Activated B cell treated with CpG ODN at 0.5 μM for 24 hours (primary cell): ENCODE measurements at regions of chr15 and their contacts with region 1.

Region 1: GRCh38 chr15:81265944-81266775 is 57.8 kb downstream of the STARD5 start:
- DNase-seq: peak; percentile 64
- ATAC-seq: peak; percentile 92
- H3K4me3 Mint-ChIP-seq: peak overlapping the region; percentile 69
- H3K27ac Mint-ChIP-seq: no peak overlapping the region
- H3K4me1 Mint-ChIP-seq: peaks cover 19% of the 10 kb centered on the region
- H3K27me3 Mint-ChIP-seq: no peaks in the 10 kb centered on the region
- CTCF ChIP-seq: no peak

Region 2: GRCh38 chr15:80695104-80695910 is 570.9 kb before region 1 on chr15 and contains the start of gene ABHD17C:
- CTCF ChIA-PET with region 1: no interaction called
- POLR2A ChIA-PET with region 1: no interaction called
- intact Hi-C with region 1: loop called (anchors 10 kb)
- DNase-seq: peak; percentile 58
- ATAC-seq: peak; percentile 82
- H3K4me3 Mint-ChIP-seq: peak within 1 kb of the TSS; percentile 87
- H3K27ac Mint-ChIP-seq: peak within 1 kb of the TSS; percentile 69
- H3K4me1 Mint-ChIP-seq: peaks cover 16% of the 10 kb centered on the region
- H3K27me3 Mint-ChIP-seq: peaks cover 5% of the 10 kb centered on the region
- CTCF ChIP-seq: no peak
- total RNA-seq, gene ABHD17C: 2.4 and 2.5 TPM in 2 replicates

Region 3: DNA sequence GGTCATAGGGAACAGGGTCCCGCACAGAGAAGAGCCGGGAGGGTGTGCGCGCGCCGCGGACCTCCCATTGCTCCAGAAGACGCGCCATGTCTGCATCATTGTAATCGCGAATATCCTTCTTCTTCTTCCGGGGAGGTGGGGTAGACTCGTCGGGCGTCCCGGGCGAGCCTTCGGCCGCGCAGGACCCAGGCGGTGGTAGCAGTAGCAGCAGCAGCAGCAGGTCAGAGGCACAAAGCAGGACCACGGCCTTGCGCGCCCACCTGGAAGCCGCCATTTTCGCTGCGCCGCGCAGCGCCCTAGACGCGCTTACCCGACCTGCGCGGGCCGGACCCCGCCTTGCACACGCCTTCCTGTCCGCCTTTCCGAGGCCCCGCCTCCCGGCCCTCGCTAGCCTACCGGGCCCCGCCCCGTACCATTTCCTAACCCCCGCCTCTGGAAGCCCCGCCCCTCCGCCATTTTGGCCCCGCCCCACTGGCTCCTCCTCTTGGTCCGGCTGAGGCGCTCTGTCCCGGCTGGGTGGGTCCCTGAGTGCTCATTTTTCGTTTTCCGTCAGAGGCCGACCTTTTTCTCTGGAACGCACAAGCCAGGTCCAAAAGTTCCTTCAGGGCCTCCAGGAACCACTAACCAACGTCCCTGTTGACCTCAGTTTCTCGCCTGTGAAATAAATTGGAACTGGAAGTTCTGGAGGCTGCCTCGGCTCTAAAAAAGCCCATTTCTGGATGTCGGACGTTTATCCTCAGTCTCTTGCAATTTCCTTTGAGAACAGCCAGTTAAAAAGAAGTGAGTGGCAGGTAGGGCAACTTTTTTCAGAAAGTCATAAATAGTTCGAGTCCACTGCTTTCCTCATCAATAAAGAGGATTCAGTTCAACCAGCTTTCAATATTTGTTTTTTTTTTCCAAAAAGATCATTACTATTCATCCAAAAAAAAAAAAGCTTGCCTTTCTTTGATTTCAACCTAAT is 276.4 kb before region 1 on chr15 and contains the start of gene MESD:
- CTCF ChIA-PET with region 1: interaction called, 12 read pairs
- POLR2A ChIA-PET with region 1: no interaction called
- intact Hi-C with region 1: no loop called
- DNase-seq: peak; percentile 90
- ATAC-seq: peak; percentile 99
- H3K4me3 Mint-ChIP-seq: peak within 1 kb of the TSS; percentile 99
- H3K27ac Mint-ChIP-seq: peak within 1 kb of the TSS; percentile 99
- H3K4me1 Mint-ChIP-seq: peaks cover 54% of the 10 kb centered on the region
- H3K27me3 Mint-ChIP-seq: no peaks in the 10 kb centered on the region
- CTCF ChIP-seq: no peak
- total RNA-seq, gene MESD: 21.4 and 23.8 TPM in 2 replicates

Region 4: GRCh38 chr15:81071120-81071519 is 195.0 kb before region 1 on chr15:
- CTCF ChIA-PET with region 1: no interaction called
- POLR2A ChIA-PET with region 1: no interaction called
- intact Hi-C with region 1: no loop called
- DNase-seq: no peak
- ATAC-seq: no peak
- H3K4me3 Mint-ChIP-seq: no peak overlapping the region
- H3K27ac Mint-ChIP-seq: no peak overlapping the region
- H3K4me1 Mint-ChIP-seq: no peaks in the 10 kb centered on the region
- H3K27me3 Mint-ChIP-seq: peaks cover 14% of the 10 kb centered on the region
- CTCF ChIP-seq: no peak

Region 5: DNA sequence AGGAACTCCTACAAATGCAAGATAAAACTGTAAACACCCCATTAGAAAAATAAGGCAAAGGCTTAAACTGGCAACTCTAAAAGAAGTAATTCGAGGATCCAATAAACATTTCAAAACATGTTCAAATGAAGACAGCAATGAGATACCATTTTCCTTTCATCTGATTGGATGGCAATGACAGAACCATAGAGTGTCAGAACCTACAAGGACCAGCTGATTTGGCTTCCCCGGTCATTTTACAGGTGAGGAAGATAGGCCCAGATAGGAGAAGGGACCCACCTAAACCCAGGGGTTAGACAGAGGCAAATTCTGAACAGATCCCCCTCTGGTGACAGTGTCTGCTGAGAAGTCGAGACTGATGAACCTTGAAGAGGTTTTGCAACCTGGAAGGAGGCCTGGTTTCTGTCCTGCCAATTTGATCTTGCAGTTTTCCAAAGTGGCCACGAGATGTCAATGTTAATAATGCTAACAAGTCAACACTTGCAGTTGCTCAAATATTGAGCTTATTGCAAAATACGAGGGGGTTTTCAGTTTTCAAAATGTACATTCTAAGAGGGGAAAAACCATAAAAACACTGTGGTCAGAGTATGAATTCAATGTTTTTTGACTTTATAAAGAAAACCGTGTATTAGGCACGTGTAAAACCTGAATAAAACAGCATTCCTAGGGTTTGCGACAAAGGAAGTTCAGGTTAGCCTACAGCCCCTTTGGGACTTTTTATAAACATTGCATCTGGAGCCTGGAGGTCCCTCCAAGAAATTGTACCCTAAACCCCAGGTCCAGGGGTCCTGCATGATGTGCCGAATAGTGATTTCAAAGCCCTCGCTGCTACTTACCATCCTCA is 110.6 kb before region 1 on chr15:
- CTCF ChIA-PET with region 1: interaction called, 98 read pairs
- POLR2A ChIA-PET with region 1: interaction called, 7 read pairs
- intact Hi-C with region 1: loop called (anchors 1 kb)
- DNase-seq: no peak
- ATAC-seq: peak; percentile 31
- H3K4me3 Mint-ChIP-seq: no peak overlapping the region
- H3K27ac Mint-ChIP-seq: no peak overlapping the region
- H3K4me1 Mint-ChIP-seq: peaks cover 3% of the 10 kb centered on the region
- H3K27me3 Mint-ChIP-seq: peaks cover 4% of the 10 kb centered on the region
- CTCF ChIP-seq: no peak

Region 6: GRCh38 chr15:81296673-81297072 is 30.5 kb after region 1 on chr15:
- CTCF ChIA-PET with region 1: interaction called, 22 read pairs
- POLR2A ChIA-PET with region 1: interaction called, 20 read pairs
- intact Hi-C with region 1: no loop called
- DNase-seq: peak; percentile 56
- ATAC-seq: peak; percentile 32
- H3K4me3 Mint-ChIP-seq: peak overlapping the region; percentile 99
- H3K27ac Mint-ChIP-seq: peak overlapping the region; percentile 99
- H3K4me1 Mint-ChIP-seq: peaks cover 98% of the 10 kb centered on the region
- H3K27me3 Mint-ChIP-seq: no peaks in the 10 kb centered on the region
- CTCF ChIP-seq: no peak

Region 7: DNA sequence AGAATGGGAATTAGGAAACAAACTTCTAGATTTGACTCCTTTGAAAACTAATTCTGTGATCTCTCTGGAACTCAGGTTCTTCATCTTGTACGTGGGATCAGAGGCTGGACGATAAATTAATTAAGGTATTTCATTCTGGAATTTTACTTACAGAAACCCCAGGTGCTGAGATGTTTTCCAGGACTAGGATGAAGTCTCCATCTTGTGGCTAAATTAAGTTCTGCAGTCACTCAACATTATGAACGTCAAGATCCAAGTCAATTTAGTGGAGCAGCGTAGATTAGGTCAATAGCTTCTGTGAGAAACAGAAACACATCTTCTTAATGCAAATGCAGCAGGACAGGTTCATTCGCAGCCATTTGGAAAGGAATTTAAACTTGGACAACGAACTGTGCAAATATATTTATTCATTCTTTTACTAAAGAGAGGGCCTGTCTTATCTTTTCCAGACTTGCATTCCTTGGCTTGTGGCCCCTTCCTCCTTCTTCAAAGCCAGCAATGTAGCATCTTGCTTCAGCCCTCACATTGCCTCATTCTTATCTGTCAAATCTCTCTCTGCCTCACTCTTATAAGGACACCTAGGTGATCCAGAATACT is 134.6 kb after region 1 on chr15:
- CTCF ChIA-PET with region 1: interaction called, 29 read pairs
- POLR2A ChIA-PET with region 1: no interaction called
- intact Hi-C with region 1: loop called (anchors 2 kb)
- DNase-seq: no peak
- ATAC-seq: peak; percentile 58
- H3K4me3 Mint-ChIP-seq: no peak overlapping the region
- H3K27ac Mint-ChIP-seq: no peak overlapping the region
- H3K4me1 Mint-ChIP-seq: no peaks in the 10 kb centered on the region
- H3K27me3 Mint-ChIP-seq: no peaks in the 10 kb centered on the region
- CTCF ChIP-seq: peak; percentile 31

Region 8: DNA sequence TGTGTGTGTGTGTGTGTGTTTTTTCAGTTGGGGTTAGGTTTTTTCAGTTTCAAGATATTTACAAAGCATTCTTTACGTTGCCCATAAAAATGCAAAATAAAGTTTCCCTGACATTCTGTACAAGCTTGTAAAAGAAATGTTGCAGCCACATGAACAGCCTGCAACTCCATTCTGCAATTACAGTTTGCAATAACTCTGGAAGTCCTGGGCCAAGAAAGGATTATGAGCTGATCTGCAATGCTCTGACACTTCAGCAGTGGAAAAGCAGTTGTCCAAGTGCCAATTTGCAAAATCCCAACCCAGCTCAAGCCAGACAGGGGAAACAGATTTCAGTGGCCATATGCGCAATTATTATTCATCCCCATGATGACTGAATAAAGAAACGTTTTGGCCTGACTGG is 457.5 kb after region 1 on chr15:
- CTCF ChIA-PET with region 1: no interaction called
- POLR2A ChIA-PET with region 1: no interaction called
- intact Hi-C with region 1: no loop called
- DNase-seq: no peak
- ATAC-seq: no peak
- H3K4me3 Mint-ChIP-seq: no peak overlapping the region
- H3K27ac Mint-ChIP-seq: no peak overlapping the region
- H3K4me1 Mint-ChIP-seq: no peaks in the 10 kb centered on the region
- H3K27me3 Mint-ChIP-seq: no peaks in the 10 kb centered on the region
- CTCF ChIP-seq: no peak